Heart left ventricle (tissue), 16 donors: ENCODE measurements at regions of chr3 and their contacts with region 1.

Region 1: GRCh38 chr3:55169608-55170010 is 241.8 kb upstream of the LRTM1 start:
- DNase-seq: no peak
- ATAC-seq: no peak
- H3K4me3 ChIP-seq: no peak overlapping the region
- H3K27ac ChIP-seq: no peak overlapping the region
- H3K4me1 ChIP-seq: no peaks in the 10 kb centered on the region
- H3K27me3 ChIP-seq: no peaks in the 10 kb centered on the region
- CTCF ChIP-seq: no peak
- POLR2A ChIP-seq: no peak

Region 2: DNA sequence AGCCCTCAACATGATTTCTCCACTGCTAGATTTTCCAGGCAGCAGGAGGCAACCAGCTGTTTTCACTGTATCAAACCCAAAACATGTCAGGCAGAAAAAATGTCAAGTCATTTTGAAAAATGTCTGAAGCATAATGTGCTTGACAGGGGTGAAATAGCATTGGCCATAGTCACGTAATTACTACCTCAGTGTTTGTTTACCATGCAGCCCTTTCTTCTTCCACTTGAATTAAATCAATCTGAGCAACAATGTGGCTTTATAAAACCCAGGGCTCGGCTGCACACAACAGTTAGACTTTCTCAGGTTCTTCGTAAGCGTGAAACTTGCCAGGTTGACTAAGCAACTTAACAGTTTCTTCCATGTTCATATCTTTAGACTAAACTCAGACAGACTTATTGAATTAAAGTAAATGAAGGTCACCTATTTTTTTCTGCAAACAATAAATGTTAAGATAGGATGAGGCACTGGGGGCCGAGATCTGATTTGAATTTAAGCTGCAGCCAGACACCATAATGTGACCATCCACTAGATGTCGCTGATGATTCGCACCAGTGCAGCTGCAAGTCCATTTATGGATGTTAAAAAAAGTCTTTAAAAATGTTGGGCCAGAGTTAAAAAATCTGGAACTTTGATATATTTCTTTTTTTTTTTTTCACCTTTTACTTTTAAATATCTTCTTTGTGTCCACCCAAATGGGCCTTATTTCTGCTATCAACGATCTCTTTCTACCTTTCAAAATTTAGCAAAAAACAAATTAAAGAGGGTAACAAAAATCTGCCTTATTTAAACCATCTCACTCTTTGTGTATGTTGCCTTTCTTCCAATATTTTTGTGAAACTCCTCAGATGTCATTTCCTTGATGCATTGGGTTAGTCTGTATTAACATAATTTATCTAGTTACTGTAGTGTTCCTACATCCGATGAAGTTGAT is 741.4 kb before region 1 on chr3:
- intact Hi-C with region 1: loop called in 2 of 10 experiments (anchors 10 kb)
- DNase-seq: peak in 4 of 5 donors; percentile 32 to 44 (median 39)
- ATAC-seq: peak in 1 of 4 donors; percentile 52
- H3K4me3 ChIP-seq: peak overlapping the region in 1 of 12 donors; percentile 17
- H3K27ac ChIP-seq: no peak overlapping the region
- H3K4me1 ChIP-seq: peaks cover 0 to 6% (median 0%) of the 10 kb centered on the region in 12 donors
- H3K27me3 ChIP-seq: peaks cover 0 to 2% (median 0%) of the 10 kb centered on the region in 9 donors
- CTCF ChIP-seq: peak; percentile 68 to 89 (median 76)
- POLR2A ChIP-seq: no peak

Region 3: DNA sequence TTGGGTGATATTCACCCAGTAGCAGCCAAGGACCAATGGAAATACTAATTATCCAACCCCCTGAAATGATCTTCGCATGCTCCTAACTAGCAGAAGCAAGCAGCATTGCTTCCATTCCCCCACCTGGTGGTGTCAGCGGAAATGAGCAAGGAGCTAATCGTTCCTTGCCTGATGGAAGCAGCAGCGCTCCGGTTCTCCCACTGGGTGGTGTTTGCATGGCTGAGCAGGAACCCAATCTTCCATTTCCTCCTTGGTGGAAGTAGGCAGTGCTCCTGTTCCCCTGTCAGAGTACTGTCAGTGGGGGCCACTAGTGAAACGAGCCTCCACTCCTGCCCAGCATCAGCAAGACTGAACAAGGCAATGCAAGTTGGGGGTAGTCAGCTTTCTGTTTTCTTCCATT is 735.8 kb before region 1 on chr3:
- intact Hi-C with region 1: loop called in 2 of 10 experiments (anchors 10 kb)
- DNase-seq: no peak
- ATAC-seq: no peak
- H3K4me3 ChIP-seq: no peak overlapping the region
- H3K27ac ChIP-seq: no peak overlapping the region
- H3K4me1 ChIP-seq: no peaks in the 10 kb centered on the region
- H3K27me3 ChIP-seq: peaks cover 0 to 2% (median 0%) of the 10 kb centered on the region in 9 donors
- CTCF ChIP-seq: no peak
- POLR2A ChIP-seq: no peak

Region 4: GRCh38 chr3:54863131-54863765 is 306.4 kb before region 1 on chr3:
- intact Hi-C with region 1: loop called in 4 of 10 experiments (anchors 10 kb)
- DNase-seq: no peak
- ATAC-seq: peak in 2 of 4 donors; percentile 28 to 68
- H3K4me3 ChIP-seq: no peak overlapping the region
- H3K27ac ChIP-seq: no peak overlapping the region
- H3K4me1 ChIP-seq: peaks cover 0 to 38% (median 3%) of the 10 kb centered on the region in 12 donors
- H3K27me3 ChIP-seq: no peaks in the 10 kb centered on the region
- CTCF ChIP-seq: no peak
- POLR2A ChIP-seq: no peak

Region 5: GRCh38 chr3:54939557-54940300 is 229.9 kb before region 1 on chr3:
- intact Hi-C with region 1: loop called in 1 of 10 experiments (anchors 10 kb)
- DNase-seq: no peak
- ATAC-seq: no peak
- H3K4me3 ChIP-seq: no peak overlapping the region
- H3K27ac ChIP-seq: no peak overlapping the region
- H3K4me1 ChIP-seq: no peaks in the 10 kb centered on the region
- H3K27me3 ChIP-seq: peaks cover 0 to 5% (median 0%) of the 10 kb centered on the region in 9 donors
- CTCF ChIP-seq: no peak
- POLR2A ChIP-seq: no peak

Region 6: DNA sequence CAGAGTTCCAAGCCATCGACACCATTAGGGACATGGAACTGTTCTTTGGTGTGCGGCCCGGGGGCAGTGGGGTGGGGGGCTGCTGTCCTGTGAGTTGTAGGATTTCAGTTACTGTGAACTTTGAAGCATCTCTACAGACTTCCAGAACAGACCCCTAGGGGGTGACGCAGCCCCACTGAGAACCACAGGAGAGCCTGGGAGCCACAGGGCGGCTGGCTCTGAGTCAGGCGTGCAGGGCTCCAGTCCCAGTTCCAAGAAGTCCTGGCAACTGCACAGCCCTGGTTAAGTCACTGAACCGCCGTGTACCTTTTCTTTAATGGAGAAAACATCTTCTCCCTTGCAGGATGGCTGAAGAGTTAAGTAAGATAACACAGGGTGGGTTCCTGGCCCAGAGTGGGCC is 218.2 kb before region 1 on chr3:
- intact Hi-C with region 1: loop called in 2 of 10 experiments (anchors 10 kb)
- DNase-seq: peak; percentile 70 to 87 (median 84)
- ATAC-seq: peak; percentile 93 to 100 (median 98)
- H3K4me3 ChIP-seq: no peak overlapping the region
- H3K27ac ChIP-seq: no peak overlapping the region
- H3K4me1 ChIP-seq: peaks cover 0 to 16% (median 2%) of the 10 kb centered on the region in 12 donors
- H3K27me3 ChIP-seq: no peaks in the 10 kb centered on the region
- CTCF ChIP-seq: peak; percentile 47 to 71 (median 60)
- POLR2A ChIP-seq: no peak

Region 7: GRCh38 chr3:55639884-55640765 is 470.5 kb after region 1 on chr3:
- intact Hi-C with region 1: no loop called
- DNase-seq: no peak
- ATAC-seq: no peak
- H3K4me3 ChIP-seq: no peak overlapping the region
- H3K27ac ChIP-seq: no peak overlapping the region
- H3K4me1 ChIP-seq: no peaks in the 10 kb centered on the region
- H3K27me3 ChIP-seq: peaks cover 0 to 22% (median 0%) of the 10 kb centered on the region in 9 donors
- CTCF ChIP-seq: no peak
- POLR2A ChIP-seq: no peak